ENCODE measurements at regions of chr15 and their contacts with region 1.

Region 1: DNA sequence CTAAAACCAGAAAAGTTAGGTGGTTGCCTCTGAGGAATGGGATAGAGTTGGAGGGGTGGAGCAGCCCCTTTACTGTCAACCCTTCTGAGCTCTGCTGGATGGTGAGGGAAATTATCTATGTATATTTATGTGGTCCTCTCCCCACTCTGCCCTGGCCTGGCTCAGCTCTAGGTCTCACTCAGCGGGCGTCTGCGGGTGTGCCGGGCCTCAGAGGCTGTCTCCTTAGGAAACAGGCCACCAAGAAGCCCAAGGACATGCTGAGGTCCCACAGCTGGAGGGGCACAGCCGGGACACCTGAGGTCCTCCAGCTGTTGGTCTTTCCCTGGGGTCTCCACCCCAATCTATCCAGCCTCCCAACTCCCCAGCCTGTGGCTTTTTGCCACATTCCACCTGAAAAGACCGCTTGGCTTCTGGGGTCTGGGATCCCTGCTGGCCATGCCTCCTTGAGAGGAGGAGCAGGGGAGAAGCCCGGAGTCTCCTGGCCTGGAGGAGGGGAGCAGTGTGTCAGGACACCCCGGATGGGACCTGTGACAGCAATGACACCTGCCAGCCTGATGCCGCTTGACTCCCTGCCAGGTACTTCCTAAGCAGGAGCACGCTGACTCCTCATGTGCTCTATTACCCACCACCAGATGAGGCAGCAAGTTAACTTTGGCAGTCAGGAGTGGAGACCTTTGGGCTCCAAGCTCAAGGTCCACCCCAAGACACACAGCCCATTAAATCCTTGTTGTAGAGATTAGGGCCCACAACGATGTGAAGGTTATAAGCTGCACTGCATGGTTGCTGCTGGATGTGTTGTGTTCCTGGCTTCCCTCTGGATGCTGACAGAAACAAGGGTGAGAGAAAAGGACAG is at the start of gene SLC28A1:
- DNase-seq: no peak
- H3K4me3 ChIP-seq: no peak within 1 kb of the TSS
- H3K27ac ChIP-seq: no peak within 1 kb of the TSS
- H3K4me1 ChIP-seq: no peaks in the 10 kb centered on the region
- H3K27me3 ChIP-seq: no peaks in the 10 kb centered on the region
- CTCF ChIP-seq: no peak
- total RNA-seq, gene SLC28A1: 0.70 and 1.2 TPM in 2 replicates

Region 2: DNA sequence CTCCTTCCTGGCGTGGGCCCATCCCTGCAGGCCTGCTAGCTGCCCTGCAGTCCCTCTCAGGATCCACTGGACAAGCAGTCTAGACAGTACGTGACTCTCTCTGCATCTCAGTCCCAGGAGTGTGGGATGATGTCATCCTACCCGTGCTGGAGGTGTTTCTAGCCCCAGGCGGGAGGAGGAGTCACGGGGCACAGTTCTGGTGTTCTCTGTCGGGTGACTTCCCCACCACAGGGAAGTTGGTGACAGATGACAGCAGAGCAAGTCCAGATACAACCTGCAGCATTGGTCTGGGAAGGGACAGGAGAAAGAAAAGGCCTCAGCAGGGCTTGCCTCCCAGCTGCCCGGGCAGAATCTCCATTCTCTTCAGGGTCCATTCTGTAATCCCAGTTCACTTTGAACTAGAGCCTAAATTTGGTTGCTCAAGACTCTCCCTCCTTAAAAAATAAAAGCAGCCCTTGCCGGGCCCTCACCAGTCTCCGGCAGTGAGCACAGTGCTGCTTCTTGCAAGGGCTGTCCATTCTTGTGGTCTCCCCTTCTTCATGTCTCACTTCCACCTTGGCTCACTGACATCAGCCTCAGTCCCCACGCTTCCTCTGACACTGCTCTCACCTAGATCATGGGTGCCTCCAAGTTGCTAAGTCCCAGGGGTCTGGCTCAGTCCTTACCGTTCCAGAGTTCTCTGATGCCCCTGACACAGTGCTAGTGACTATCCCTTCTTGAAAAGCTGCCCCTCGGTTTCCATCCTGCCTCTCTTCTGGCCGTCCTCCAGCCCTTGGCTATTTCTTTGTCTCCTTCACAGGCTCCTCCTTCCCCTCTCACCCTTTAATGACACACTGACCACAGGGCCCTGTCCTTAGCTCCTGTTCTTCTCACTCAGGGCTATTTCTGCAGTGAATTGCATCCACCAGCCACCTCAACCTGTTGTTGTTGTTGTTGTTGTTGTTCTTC is 31.1 kb after region 1 on chr15:
- CTCF ChIA-PET with region 1: no interaction called
- POLR2A ChIA-PET with region 1: interaction called, 12 read pairs
- intact Hi-C with region 1: no loop called
- DNase-seq: peak; percentile 95
- H3K4me3 ChIP-seq: no peak overlapping the region
- H3K27ac ChIP-seq: peak overlapping the region; percentile 99
- H3K4me1 ChIP-seq: peaks cover 62% of the 10 kb centered on the region
- H3K27me3 ChIP-seq: no peaks in the 10 kb centered on the region
- CTCF ChIP-seq: no peak

Measured in PC-9 (cell line).